ENCODE measurements at regions of chr2 and their contacts with region 1.

Region 1: GRCh38 chr2:152126664-152127063 is 27.8 kb upstream of the CACNB4 start:
- DNase-seq: no peak
- ATAC-seq: no peak

Region 2: GRCh38 chr2:152097801-152098495 is 28.7 kb before region 1 on chr2:
- intact Hi-C with region 1: loop called (anchors 1 kb)
- DNase-seq: peak; percentile 64
- ATAC-seq: peak; percentile 76

Measured in sciatic nerve (tissue), 2 donors.